Vagina (tissue), 2 donors: ENCODE measurements at regions of chr1 and their contacts with region 1.

Region 1: GRCh38 chr1:43227143-43227764 is 42.5 kb upstream of the TMEM125 start:
- DNase-seq: no peak
- H3K4me3 ChIP-seq: no peak overlapping the region
- H3K27ac ChIP-seq: peak overlapping the region; percentile 4
- H3K4me1 ChIP-seq: peaks cover 9% of the 10 kb centered on the region
- H3K27me3 ChIP-seq: no peaks in the 10 kb centered on the region
- CTCF ChIP-seq: peak; percentile 75 to 88 (median 85)
- POLR2A ChIP-seq: no peak

Region 2: GRCh38 chr1:42784946-42785693 is 442.1 kb before region 1 on chr1 and contains the start of gene TMEM269:
- intact Hi-C with region 1: loop called (anchors 5 kb)
- DNase-seq: no peak
- H3K4me3 ChIP-seq: peak within 1 kb of the TSS; percentile 45 to 48
- H3K27ac ChIP-seq: no peak within 1 kb of the TSS
- H3K4me1 ChIP-seq: peaks cover 19% of the 10 kb centered on the region
- H3K27me3 ChIP-seq: no peaks in the 10 kb centered on the region
- CTCF ChIP-seq: no peak
- POLR2A ChIP-seq: no peak
- total RNA-seq, gene TMEM269: not detected

Region 3: DNA sequence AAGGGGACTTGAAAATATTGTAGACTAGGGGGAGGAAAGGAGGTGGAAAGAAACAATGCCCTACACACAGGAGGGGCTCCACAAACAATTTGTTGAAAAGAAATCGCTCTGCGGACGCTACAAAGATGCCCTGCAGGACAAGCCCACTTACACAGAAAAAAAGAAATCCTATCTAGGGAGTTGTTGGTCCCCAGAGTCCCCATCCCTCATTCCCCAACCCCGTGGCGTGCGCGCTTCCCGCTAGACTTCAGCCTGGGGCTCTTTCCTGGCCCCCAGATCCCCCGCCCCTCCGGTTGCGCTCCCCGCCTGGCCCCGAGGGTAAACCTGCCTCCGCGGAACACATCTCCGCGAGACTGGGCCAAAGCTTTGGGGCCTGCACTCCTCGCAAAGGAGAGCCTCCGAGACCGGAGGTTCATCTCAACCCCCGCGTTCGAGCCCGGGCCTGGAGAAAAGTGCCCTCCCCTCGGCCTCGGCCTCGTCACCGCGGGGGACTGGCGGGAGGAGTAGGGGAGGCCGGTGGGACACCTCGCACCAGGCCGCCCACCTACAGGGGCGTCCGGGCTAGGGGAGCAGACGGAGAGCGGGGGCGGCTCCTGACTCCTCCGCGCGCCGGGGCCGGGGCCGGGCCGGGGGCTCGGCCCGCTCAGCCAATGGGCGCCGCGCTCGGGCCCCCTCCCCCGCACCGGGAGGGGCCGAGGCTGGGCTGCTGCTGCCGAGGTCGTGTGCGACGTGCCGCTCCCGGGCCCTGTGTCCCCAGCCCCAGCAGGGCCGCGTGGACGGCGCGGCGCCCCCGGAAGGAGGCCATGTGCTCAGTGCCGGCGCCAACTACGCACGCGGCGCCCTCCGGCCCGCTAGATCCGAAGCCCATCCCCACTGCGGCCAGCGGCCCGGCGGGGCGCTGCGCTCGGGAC is 269.4 kb before region 1 on chr1:
- intact Hi-C with region 1: no loop called
- DNase-seq: no peak
- H3K4me3 ChIP-seq: peak overlapping the region; percentile 64 to 81
- H3K27ac ChIP-seq: peak overlapping the region; percentile 92
- H3K4me1 ChIP-seq: peaks cover 52% of the 10 kb centered on the region
- H3K27me3 ChIP-seq: no peaks in the 10 kb centered on the region
- CTCF ChIP-seq: no peak
- POLR2A ChIP-seq: peak in 1 of 2 donors; percentile 8

Region 4: GRCh38 chr1:43414634-43415223 is 187.5 kb after region 1 on chr1:
- intact Hi-C with region 1: loop called (anchors 2 kb)
- DNase-seq: no peak
- H3K4me3 ChIP-seq: no peak overlapping the region
- H3K27ac ChIP-seq: no peak overlapping the region
- H3K4me1 ChIP-seq: no peaks in the 10 kb centered on the region
- H3K27me3 ChIP-seq: no peaks in the 10 kb centered on the region
- CTCF ChIP-seq: peak; percentile 12 to 41 (median 35)
- POLR2A ChIP-seq: no peak